ENCODE measurements at regions of chr6 and their contacts with region 1.

Region 1: GRCh38 chr6:27126815-27127537 is 120.5 kb upstream of the PRSS16 start:
- DNase-seq: peak; percentile 72 to 83
- H3K4me3 ChIP-seq: peak overlapping the region; percentile 52
- H3K27ac ChIP-seq: no peak overlapping the region
- H3K4me1 ChIP-seq: peaks cover 12% of the 10 kb centered on the region
- H3K27me3 ChIP-seq: no peaks in the 10 kb centered on the region
- CTCF ChIP-seq: peak; percentile 75

Region 2: GRCh38 chr6:26607434-26608230 is 519.3 kb before region 1 on chr6:
- CTCF ChIA-PET with region 1: interaction called, 3 read pairs
- POLR2A ChIA-PET with region 1: no interaction called
- intact Hi-C with region 1: loop called (anchors 1 kb)
- DNase-seq: peak; percentile 49 to 56
- H3K4me3 ChIP-seq: peak overlapping the region; percentile 37; the same call in 1 of the 2 replicates
- H3K27ac ChIP-seq: no peak overlapping the region
- H3K4me1 ChIP-seq: no peaks in the 10 kb centered on the region
- H3K27me3 ChIP-seq: no peaks in the 10 kb centered on the region
- CTCF ChIP-seq: peak; percentile 83

Region 3: DNA sequence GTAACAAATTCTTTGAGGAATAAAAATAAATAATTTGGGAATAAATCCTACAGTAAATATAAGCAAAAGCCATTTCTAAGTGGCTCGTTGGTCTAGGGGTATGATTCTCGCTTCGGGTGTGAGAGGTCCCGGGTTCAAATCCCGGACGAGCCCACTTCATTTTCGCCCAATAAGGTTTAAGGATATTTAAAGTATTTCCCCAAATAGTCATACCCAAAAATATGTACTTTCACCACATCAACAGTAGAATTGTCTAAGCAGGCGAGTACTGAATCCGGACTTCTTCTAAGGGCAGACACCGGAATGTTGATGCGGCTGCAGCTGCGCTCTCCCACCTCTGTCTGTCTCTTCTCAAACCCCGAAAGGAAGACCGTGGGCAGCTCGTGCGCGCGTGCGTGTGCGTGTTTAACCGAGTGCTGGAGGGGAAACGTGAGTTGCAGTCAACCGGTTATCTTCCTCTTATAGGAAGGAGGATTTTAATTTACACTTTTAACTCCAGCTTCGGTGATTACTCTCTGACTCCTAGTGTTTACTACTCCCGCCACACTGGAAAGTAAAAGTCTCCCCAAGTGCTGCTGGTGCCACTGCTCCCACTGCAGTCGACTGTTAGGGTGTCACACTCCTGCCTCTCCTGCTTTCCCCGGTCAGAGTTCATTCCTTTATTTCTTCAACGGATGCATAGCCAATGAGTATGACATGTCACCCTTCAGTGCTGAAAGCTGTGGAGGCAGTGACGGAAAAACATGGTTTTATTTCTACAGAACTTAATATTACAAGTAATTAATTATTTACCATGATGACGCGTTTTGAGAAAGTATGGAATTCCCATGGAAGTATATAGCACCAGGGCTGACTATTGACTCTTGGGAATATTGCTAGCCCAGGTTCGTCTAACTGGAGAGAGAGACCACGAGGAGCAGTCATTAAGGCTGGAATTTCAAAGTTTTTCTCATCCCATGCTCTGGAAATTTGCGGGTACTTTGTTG is 35.0 kb before region 1 on chr6:
- CTCF ChIA-PET with region 1: interaction called, 4 read pairs
- POLR2A ChIA-PET with region 1: interaction called, 13 read pairs
- intact Hi-C with region 1: no loop called
- DNase-seq: peak; percentile 59 to 81
- H3K4me3 ChIP-seq: peak overlapping the region; percentile 62
- H3K27ac ChIP-seq: peak overlapping the region; percentile 15; the same call in 1 of the 2 replicates
- H3K4me1 ChIP-seq: peaks cover 5% of the 10 kb centered on the region
- H3K27me3 ChIP-seq: no peaks in the 10 kb centered on the region
- CTCF ChIP-seq: no peak

Region 4: DNA sequence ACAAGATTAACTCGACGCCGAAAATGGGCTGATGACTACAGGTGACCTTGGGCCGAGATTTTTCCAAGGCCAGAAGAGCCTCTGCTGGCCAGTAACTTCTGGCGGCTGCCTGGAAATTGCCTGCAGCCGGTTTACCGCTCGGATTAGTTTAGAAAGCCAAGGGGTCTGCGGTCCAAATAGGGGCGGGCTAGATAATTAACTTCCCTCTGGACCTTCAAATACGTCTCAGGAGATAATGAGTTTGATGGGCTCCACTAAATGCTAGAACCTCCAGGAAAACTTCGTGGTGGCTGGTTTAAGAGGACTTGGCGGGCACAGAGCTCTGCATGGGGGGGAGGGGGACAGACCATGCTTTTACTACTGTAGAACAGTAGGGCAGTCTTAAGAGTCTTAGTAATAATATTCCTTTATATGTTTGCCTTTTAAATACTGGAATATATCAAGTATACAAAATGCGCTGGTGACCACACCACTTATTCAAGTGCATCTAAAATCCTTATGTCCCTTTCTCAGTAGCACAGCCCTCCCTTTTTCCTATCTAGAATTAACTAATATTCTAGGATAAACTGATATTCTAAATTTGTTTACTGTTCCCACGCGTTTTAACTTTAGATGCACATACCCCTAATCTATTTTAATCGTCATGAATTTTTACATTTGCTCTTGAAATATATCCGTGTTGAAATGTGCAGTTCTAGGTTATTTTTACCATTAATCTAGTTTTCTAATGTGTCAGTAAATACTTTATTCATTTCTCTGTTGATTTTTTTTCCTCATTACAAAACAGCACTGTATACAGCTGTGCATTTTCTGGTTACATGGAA is 13.0 kb after region 1 on chr6:
- CTCF ChIA-PET with region 1: no interaction called
- POLR2A ChIA-PET with region 1: interaction called, 202 read pairs
- intact Hi-C with region 1: no loop called
- DNase-seq: no peak
- H3K4me3 ChIP-seq: peak overlapping the region; percentile 60
- H3K27ac ChIP-seq: peak overlapping the region; percentile 53
- H3K4me1 ChIP-seq: peaks cover 18% of the 10 kb centered on the region
- H3K27me3 ChIP-seq: no peaks in the 10 kb centered on the region
- CTCF ChIP-seq: no peak

Region 5: GRCh38 chr6:27352850-27353249 is 225.9 kb after region 1 on chr6:
- CTCF ChIA-PET with region 1: no interaction called
- POLR2A ChIA-PET with region 1: no interaction called
- intact Hi-C with region 1: no loop called
- DNase-seq: no peak
- H3K4me3 ChIP-seq: no peak overlapping the region
- H3K27ac ChIP-seq: no peak overlapping the region
- H3K4me1 ChIP-seq: no peaks in the 10 kb centered on the region
- H3K27me3 ChIP-seq: no peaks in the 10 kb centered on the region
- CTCF ChIP-seq: no peak